GM12878 (cell line): ENCODE measurements at regions of chr16 and their contacts with region 1.

Region 1: DNA sequence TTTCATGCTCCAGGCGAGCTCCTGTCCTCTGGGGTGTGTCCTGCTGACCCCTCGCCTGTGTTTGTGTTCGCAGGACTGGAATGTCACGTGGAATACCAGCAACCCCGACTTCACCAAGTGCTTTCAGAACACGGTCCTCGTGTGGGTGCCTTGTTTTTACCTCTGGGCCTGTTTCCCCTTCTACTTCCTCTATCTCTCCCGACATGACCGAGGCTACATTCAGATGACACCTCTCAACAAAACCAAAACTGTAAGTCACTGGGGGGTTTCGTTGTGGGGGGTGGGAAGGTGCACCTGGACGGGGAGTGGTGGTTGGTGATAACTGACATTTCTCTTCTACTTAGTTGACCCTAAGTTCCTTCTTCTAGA is 58.3 kb downstream of the ABCC1 start:
- DNase-seq: peak; percentile 85
- ATAC-seq: peak; percentile 89
- H3K4me3 ChIP-seq: peak overlapping the region; percentile 34; the same call in 1 of the 2 replicates
- H3K27ac ChIP-seq: peak overlapping the region; percentile 79
- H3K4me1 ChIP-seq: peaks cover 26% of the 10 kb centered on the region
- H3K27me3 ChIP-seq: no peaks in the 10 kb centered on the region
- CTCF ChIP-seq: no peak
- EP300 ChIP-seq: peak; percentile 48 to 80; a peak in 2 of 4 replicates
- POLR2A ChIP-seq: peak; percentile 68
- RAD21 ChIP-seq: 0 out of 2 replicates have a peak, but pooled peaks have one; percentile 16

Region 2: GRCh38 chr16:15899538-15900100 is 108.1 kb before region 1 on chr16:
- CTCF ChIA-PET with region 1: no interaction called
- POLR2A ChIA-PET with region 1: interaction called, 4 read pairs
- RAD21 ChIA-PET with region 1: no interaction called
- SMC1A ChIA-PET with region 1: no interaction called
- in situ Hi-C with region 1: no loop called
- intact Hi-C with region 1: loop called (anchors 5 kb)
- DNase-seq: peak; percentile 65
- ATAC-seq: peak; percentile 84
- H3K4me3 ChIP-seq: no peak overlapping the region
- H3K27ac ChIP-seq: peak overlapping the region; percentile 41
- H3K4me1 ChIP-seq: peaks cover 37% of the 10 kb centered on the region
- H3K27me3 ChIP-seq: no peaks in the 10 kb centered on the region
- CTCF ChIP-seq: no peak
- EP300 ChIP-seq: 0 out of 4 replicates have a peak, but pooled peaks have one; percentile 15 to 49
- POLR2A ChIP-seq: no peak
- RAD21 ChIP-seq: no peak

Region 3: DNA sequence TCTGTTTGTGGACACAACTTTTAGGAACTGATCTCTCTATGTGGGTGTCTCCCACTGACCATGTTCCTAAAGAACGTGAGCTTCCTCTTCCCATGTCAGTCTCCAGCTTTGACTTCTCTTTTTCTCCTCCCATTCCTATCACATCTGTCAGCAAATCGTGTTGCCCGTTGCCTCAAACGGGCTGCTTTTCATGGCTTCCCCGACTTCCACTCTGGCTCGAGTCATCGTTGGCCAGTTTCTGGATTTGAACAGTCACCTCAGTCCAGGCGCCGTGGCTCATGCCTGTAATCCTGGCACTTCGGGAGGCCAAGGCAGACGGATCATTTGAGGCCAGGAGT is 52.9 kb before region 1 on chr16:
- CTCF ChIA-PET with region 1: interaction called, 4 read pairs
- POLR2A ChIA-PET with region 1: interaction called, 11 read pairs
- RAD21 ChIA-PET with region 1: interaction called, 9 read pairs
- SMC1A ChIA-PET with region 1: interaction called, 31 read pairs
- in situ Hi-C with region 1: no loop called
- intact Hi-C with region 1: loop called (anchors 5 kb)
- DNase-seq: no peak
- ATAC-seq: no peak
- H3K4me3 ChIP-seq: no peak overlapping the region
- H3K27ac ChIP-seq: peak overlapping the region; percentile 20; the same call in 1 of the 2 replicates
- H3K4me1 ChIP-seq: peaks cover 19% of the 10 kb centered on the region
- H3K27me3 ChIP-seq: no peaks in the 10 kb centered on the region
- CTCF ChIP-seq: no peak
- EP300 ChIP-seq: no peak
- POLR2A ChIP-seq: no peak
- RAD21 ChIP-seq: no peak